ENCODE measurements at regions of chr7 and their contacts with region 1.

Region 1: DNA sequence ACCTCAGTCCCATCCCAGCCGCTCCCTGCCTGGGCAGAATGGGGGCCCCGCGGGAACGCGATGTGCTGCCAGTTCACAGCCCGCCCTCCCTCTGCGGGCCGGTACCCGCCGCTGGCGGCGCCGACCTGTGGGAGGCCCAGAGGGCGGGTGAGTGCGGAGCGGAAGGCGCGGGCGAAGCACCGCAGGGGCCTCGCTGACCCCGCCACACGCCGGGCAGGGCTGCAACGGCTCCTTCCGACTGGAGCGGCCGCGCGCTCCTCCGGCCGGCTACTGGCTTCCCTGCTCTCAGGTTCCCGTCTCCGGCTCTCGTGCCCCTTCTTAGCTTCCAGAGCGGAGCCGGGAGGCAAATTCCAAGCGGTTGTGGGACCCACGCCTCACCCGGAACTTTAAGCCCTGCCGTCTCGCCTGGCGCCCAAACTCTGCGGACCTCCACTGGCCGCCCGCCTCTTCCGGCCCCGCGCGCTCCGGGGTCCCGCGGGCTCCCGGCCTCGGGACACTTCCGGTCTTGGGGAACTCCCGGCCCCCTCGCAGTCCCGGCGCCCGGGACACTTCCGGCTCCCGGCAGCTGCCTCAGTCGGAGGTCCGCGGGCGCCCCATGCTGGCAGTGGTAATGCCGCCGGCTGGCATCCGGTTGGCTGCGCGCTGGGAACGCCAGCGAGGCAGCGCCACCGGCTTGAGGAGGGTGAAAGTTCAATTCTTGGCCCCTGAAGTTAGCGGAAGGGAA is at the start of gene CYREN:
- DNase-seq: peak; percentile 95
- H3K4me3 Mint-ChIP-seq: peak within 1 kb of the TSS; percentile 96
- H3K27ac Mint-ChIP-seq: peak within 1 kb of the TSS; percentile 99
- H3K4me1 Mint-ChIP-seq: peaks cover 45% of the 10 kb centered on the region
- H3K27me3 Mint-ChIP-seq: no peaks in the 10 kb centered on the region
- total RNA-seq, gene CYREN: 41.6 to 43.6 TPM

Region 2: GRCh38 chr7:134632937-134633540 is 537.4 kb before region 1 on chr7:
- CTCF ChIA-PET with region 1: interaction called, 3 read pairs
- POLR2A ChIA-PET with region 1: no interaction called
- intact Hi-C with region 1: loop called (anchors 2 kb)
- DNase-seq: peak; percentile 29
- H3K4me3 Mint-ChIP-seq: no peak overlapping the region
- H3K27ac Mint-ChIP-seq: no peak overlapping the region
- H3K4me1 Mint-ChIP-seq: peaks cover 23% of the 10 kb centered on the region
- H3K27me3 Mint-ChIP-seq: peaks cover 13% of the 10 kb centered on the region

Region 3: GRCh38 chr7:134710859-134711624 is 459.4 kb before region 1 on chr7:
- CTCF ChIA-PET with region 1: interaction called, 3 read pairs
- POLR2A ChIA-PET with region 1: no interaction called
- intact Hi-C with region 1: loop called (anchors 1 kb)
- DNase-seq: peak; percentile 78
- H3K4me3 Mint-ChIP-seq: peak overlapping the region; percentile 76
- H3K27ac Mint-ChIP-seq: peak overlapping the region; percentile 97
- H3K4me1 Mint-ChIP-seq: peaks cover 30% of the 10 kb centered on the region
- H3K27me3 Mint-ChIP-seq: no peaks in the 10 kb centered on the region

Region 4: GRCh38 chr7:134750083-134751062 is 420.1 kb before region 1 on chr7:
- CTCF ChIA-PET with region 1: no interaction called
- POLR2A ChIA-PET with region 1: no interaction called
- intact Hi-C with region 1: loop called (anchors 5 kb)
- DNase-seq: peak; percentile 83
- H3K4me3 Mint-ChIP-seq: no peak overlapping the region
- H3K27ac Mint-ChIP-seq: no peak overlapping the region
- H3K4me1 Mint-ChIP-seq: peaks cover 11% of the 10 kb centered on the region
- H3K27me3 Mint-ChIP-seq: no peaks in the 10 kb centered on the region

Region 5: DNA sequence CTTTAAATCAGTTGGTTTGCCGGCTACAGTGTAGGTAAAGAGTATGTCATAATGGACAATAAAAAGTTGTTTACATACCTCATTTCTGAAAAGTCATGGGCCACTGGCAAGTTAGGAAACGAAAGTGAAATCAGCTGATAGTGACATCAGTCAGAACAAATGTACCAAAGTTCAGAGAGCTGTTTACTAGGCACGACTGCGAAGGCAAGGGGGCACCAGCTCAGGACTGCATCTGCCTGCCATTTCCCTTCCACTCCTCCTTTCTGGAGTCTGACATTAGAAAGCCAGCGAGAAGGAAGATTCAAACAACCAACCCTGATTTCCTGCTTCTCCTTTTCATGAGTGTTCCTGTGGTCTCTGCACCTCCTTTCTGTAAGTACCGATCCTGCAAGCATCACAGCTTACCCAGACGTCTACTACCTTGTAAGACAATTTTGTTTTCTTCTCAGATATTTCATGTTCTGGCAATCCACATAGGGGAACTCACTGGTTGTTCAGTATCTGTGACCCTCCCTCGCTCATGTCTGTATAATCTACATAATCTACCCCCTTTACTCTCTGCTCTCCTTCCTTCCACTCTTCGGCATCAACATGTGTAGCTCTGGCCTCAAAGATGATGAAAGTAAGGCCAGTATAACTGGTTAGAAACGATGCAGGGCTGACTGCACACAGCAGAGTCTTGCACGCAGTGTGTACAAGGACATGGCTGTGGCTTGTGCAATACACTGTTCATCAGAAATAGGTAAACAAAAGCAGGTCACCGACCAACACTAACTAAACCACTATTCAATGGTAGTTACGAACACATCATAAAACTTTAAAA is 22.3 kb before region 1 on chr7 and contains the start of gene TMEM140:
- CTCF ChIA-PET with region 1: interaction called, 65 read pairs
- POLR2A ChIA-PET with region 1: interaction called, 32 read pairs
- intact Hi-C with region 1: loop called (anchors 1 kb)
- DNase-seq: peak; percentile 73
- H3K4me3 Mint-ChIP-seq: peak within 1 kb of the TSS; percentile 83
- H3K27ac Mint-ChIP-seq: peak within 1 kb of the TSS; percentile 95
- H3K4me1 Mint-ChIP-seq: peaks cover 60% of the 10 kb centered on the region
- H3K27me3 Mint-ChIP-seq: no peaks in the 10 kb centered on the region
- total RNA-seq, gene TMEM140: 8.6 to 10.0 TPM

Region 6: DNA sequence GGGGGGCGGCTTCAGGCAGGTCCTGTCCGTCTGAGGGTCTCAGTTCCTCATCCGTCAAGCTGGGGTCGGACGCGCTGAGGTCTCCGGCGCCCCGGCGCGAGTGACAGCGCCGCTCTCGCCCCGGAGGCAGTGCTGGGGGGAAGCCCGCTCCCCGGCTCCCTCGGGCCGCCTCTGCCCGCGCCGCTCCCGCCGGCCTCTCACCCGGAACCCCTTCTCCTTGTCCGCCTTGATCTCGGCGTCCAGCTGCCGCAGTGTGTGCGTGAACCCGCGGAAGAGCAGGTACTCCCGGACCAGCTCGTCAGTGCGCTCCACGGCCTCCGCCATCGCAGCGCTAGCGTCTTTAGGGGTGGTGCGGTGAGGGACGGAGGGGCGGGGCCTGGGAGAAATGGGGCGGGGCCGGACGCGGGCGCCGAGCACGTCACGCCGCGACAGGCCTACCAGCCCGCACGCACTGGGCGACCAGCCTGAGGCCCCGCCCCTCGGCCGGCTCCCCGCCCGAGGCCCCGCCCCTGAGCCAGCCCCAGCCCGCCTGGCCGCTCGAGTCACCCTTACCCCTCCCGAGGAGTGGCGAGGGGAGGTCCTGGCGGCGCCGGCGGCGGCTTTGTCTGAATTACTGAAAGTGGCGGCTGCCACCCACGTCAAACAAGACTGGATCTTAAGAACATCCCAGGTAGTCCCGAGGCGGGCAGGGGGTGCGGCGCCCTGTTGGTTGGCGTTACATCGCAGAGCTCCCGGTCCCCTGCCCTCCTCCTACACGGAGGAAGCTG is 40.9 kb after region 1 on chr7 and contains the start of gene WDR91:
- CTCF ChIA-PET with region 1: interaction called, 3 read pairs
- POLR2A ChIA-PET with region 1: interaction called, 10 read pairs
- intact Hi-C with region 1: loop called (anchors 1 kb)
- DNase-seq: peak; percentile 98
- H3K4me3 Mint-ChIP-seq: peak within 1 kb of the TSS; percentile 93
- H3K27ac Mint-ChIP-seq: peak within 1 kb of the TSS; percentile 83
- H3K4me1 Mint-ChIP-seq: peaks cover 23% of the 10 kb centered on the region
- H3K27me3 Mint-ChIP-seq: no peaks in the 10 kb centered on the region
- total RNA-seq, gene WDR91: 10.3 to 11.0 TPM

Region 7: DNA sequence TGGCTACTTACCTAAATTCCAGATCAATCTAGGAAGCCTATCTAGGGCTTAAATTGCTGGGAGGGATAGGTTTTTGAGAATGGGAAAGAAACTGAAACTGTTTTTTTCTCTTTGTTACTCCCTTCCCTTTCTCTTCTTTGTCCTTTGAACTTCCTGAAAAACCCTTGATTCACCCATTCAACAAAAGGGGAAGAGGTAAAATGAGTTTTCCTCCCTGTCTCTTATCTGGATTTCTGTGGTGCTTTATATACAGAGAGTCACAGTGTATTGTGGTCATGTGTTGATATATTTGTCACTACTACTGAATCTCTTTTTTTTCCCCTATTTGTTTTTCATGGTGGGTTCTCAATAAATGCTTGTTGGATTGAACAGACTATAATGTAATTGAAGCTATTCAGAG is 367.5 kb after region 1 on chr7:
- CTCF ChIA-PET with region 1: no interaction called
- POLR2A ChIA-PET with region 1: no interaction called
- intact Hi-C with region 1: no loop called
- DNase-seq: no peak
- H3K4me3 Mint-ChIP-seq: no peak overlapping the region
- H3K27ac Mint-ChIP-seq: no peak overlapping the region
- H3K4me1 Mint-ChIP-seq: no peaks in the 10 kb centered on the region
- H3K27me3 Mint-ChIP-seq: peaks cover 15% of the 10 kb centered on the region

Measured in activated CD4-positive, alpha-beta memory T cell treated with anti-CD3 and anti-CD28 coated beads for 36 hours (primary cell).